ENCODE measurements at regions of chr1 and their contacts with region 1.

Region 1: GRCh38 chr1:201396861-201397464 is 2.2 kb downstream of the LAD1 start:
- DNase-seq: peak; percentile 100
- ATAC-seq: peak; percentile 89
- H3K4me3 ChIP-seq: peak overlapping the region; percentile 80
- H3K27ac ChIP-seq: peak overlapping the region; percentile 73
- H3K4me1 ChIP-seq: peaks cover 52% of the 10 kb centered on the region
- H3K27me3 ChIP-seq: no peaks in the 10 kb centered on the region
- CTCF ChIP-seq: no peak

Region 2: GRCh38 chr1:201385299-201385891 is 11.6 kb before region 1 on chr1:
- CTCF ChIA-PET with region 1: interaction called, 4 read pairs
- POLR2A ChIA-PET with region 1: no interaction called
- intact Hi-C with region 1: loop called (anchors 1 kb)
- DNase-seq: peak; percentile 99
- ATAC-seq: peak; percentile 74
- H3K4me3 ChIP-seq: no peak overlapping the region
- H3K27ac ChIP-seq: no peak overlapping the region
- H3K4me1 ChIP-seq: peaks cover 27% of the 10 kb centered on the region
- H3K27me3 ChIP-seq: no peaks in the 10 kb centered on the region
- CTCF ChIP-seq: peak; percentile 100